KBM-7 (cell line): ENCODE measurements at regions of chr9 and their contacts with region 1.

Region 1: DNA sequence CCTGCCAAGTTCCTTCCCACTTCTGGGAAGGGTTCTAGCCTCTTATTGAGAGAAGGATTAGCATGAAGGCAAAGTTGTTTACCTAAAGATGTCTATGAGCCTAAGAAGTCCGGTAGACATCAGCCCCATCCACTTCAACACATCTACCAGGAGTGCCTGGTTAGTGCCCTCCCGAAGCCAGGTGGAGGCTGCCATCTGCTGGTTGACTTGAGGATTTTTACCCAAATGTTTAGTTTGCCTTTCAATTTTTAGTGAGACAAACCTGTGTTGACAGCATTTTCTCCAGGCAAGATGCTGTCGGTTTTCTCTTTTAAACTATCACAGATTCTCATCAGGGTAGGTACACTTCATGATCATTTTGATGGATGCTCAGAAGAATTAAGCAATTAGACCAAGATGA is 83.6 kb upstream of the TNFSF8 start:
- DNase-seq: peak; percentile 51

Region 2: DNA sequence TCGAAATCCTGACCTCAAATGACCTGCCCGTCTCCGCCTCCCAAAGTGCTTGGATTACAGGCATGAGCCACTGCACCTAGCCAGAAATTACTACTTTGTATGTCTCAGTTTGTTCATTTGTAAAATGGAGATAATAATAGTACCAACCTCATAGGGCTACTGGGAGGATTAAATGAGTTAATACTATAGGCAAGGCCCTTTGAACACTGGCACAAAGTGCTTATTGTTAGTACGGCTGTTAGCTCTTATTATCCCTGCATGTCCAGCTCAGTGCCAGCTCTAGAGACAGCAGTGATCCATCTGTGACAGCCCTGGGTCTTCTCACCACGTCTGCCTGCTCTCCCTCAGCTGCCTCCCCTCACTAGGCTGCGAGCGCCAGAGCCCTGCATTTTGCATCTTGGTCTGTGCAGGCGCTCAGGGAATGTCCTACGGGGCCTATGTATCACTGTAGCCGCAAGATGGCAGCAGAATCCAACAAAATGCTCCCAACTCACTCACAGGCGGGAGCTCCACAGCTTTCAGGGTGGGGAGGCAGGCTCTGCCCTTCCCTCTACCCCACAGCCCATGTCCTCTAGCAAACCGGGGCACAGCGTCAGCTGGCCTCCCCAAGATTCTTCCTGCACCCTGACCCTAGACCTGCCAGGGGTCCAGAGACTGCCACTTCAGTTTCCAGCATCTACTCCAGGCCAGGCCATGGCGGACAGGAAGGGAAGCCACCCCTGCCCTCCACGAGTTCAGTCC is 608.5 kb before region 1 on chr9:
- in situ Hi-C with region 1: loop called (anchors 25 kb)
- DNase-seq: peak; percentile 91

Region 3: GRCh38 chr9:114738581-114739316 is 275.2 kb before region 1 on chr9:
- in situ Hi-C with region 1: loop called (anchors 25 kb)
- DNase-seq: peak; percentile 80